Ovary (tissue), 10 donors: ENCODE measurements at regions of chr4 and their contacts with region 1.

Region 1: DNA sequence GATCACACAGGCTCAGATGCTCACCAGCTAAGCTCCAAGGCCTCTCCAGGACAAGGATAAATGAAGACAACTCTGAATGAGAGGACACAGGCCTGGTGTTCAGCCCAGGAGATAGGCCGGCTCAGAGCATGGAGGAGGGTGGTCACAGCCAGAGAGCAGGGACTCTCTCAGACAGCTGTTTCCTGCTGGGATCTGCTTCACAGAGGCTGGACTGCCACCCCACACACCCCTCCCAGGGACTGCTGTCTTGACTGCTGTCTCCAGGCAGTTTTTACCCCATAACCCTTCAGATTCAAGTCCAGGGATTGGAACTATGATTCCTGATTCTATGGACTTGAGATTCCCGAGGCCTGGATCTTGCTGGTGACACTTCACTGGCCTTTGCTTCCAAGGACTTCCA is 89.0 kb downstream of the SMIM20 start:
- DNase-seq: no peak
- H3K4me3 ChIP-seq: no peak overlapping the region
- H3K27ac ChIP-seq: no peak overlapping the region
- H3K4me1 ChIP-seq: no peaks in the 10 kb centered on the region
- H3K27me3 ChIP-seq: no peaks in the 10 kb centered on the region
- CTCF ChIP-seq: no peak
- EP300 ChIP-seq: no peak
- POLR2A ChIP-seq: no peak

Region 2: GRCh38 chr4:26047795-26048194 is 44.7 kb after region 1 on chr4:
- intact Hi-C with region 1: loop called in 1 of 4 experiments (anchors 1 kb)
- DNase-seq: peak in 1 of 5 donors; percentile 33
- H3K4me3 ChIP-seq: no peak overlapping the region
- H3K27ac ChIP-seq: peak overlapping the region; percentile 67 to 82
- H3K4me1 ChIP-seq: peaks cover 10% of the 10 kb centered on the region
- H3K27me3 ChIP-seq: no peaks in the 10 kb centered on the region
- CTCF ChIP-seq: no peak
- EP300 ChIP-seq: no peak
- POLR2A ChIP-seq: no peak

Region 3: GRCh38 chr4:26161030-26161824 is 158.2 kb after region 1 on chr4:
- intact Hi-C with region 1: no loop called
- DNase-seq: no peak
- H3K4me3 ChIP-seq: no peak overlapping the region
- H3K27ac ChIP-seq: no peak overlapping the region
- H3K4me1 ChIP-seq: no peaks in the 10 kb centered on the region
- H3K27me3 ChIP-seq: no peaks in the 10 kb centered on the region
- CTCF ChIP-seq: no peak
- EP300 ChIP-seq: no peak
- POLR2A ChIP-seq: no peak

Region 4: GRCh38 chr4:26441102-26441501 is 438.0 kb after region 1 on chr4:
- intact Hi-C with region 1: no loop called
- DNase-seq: peak in 2 of 5 donors; percentile 32 to 41
- H3K4me3 ChIP-seq: no peak overlapping the region
- H3K27ac ChIP-seq: no peak overlapping the region
- H3K4me1 ChIP-seq: peaks cover 3% of the 10 kb centered on the region
- H3K27me3 ChIP-seq: no peaks in the 10 kb centered on the region
- CTCF ChIP-seq: no peak
- EP300 ChIP-seq: no peak
- POLR2A ChIP-seq: no peak